ENCODE measurements at regions of chr17 and their contacts with region 1.

Region 1: DNA sequence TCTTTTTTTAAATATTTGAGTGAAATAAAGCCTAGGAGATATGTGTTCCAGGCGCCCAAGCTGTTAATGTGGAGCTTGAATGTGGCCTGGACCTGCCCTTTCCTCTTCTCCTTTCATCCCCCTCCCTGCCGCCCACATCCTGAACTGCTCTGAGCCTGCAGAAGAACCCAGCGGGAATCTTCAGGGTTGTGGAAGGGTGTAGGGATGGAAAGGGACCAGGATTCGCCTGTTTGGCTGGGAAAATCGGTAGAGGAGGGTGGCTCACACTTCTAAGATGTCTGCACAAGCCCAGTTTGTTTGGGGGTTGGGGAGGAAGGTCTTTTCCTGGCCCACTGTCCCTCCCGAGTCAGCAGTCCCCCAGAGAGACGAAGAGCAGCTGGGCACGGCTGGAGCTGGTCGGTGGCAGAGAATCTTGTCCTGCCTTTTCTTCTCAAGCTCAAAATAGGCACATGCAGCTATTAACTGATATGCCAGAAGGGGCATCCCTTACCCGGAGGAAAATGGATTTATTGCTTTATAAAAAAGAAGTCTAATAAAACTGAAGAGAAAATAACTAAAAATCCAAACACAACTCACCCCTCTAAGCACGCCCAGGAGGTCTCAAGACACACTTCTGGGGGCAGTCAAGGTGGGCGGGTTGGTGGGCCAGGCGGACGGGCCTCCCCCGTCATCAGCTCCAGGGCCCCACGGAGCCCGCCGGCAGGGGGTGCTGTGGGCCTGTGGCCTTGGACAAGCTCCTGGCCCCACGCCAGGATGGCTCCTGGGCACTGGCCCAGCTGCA is 11.5 kb upstream of the PITPNA start:
- DNase-seq: peak; percentile 88 to 89
- H3K4me3 ChIP-seq: no peak overlapping the region
- H3K27ac ChIP-seq: peak overlapping the region in 2 of 3 donors; percentile 54 to 80
- H3K4me1 ChIP-seq: peaks cover 15 to 38% of the 10 kb centered on the region in 2 donors
- H3K27me3 ChIP-seq: no peaks in the 10 kb centered on the region
- CTCF ChIP-seq: peak; percentile 91 to 98 (median 94)
- POLR2A ChIP-seq: no peak

Region 2: GRCh38 chr17:1629647-1630310 is 55.7 kb after region 1 on chr17:
- intact Hi-C with region 1: loop called (anchors 5 kb)
- DNase-seq: peak; percentile 47 to 58
- H3K4me3 ChIP-seq: peak overlapping the region in 2 of 3 donors; percentile 67 to 75
- H3K27ac ChIP-seq: peak overlapping the region in 2 of 3 donors; percentile 95 to 96
- H3K4me1 ChIP-seq: peaks cover 15 to 29% of the 10 kb centered on the region in 2 donors
- H3K27me3 ChIP-seq: no peaks in the 10 kb centered on the region
- CTCF ChIP-seq: peak in 5 of 6 experiments; percentile 14 to 59 (median 47)
- POLR2A ChIP-seq: no peak

Region 3: DNA sequence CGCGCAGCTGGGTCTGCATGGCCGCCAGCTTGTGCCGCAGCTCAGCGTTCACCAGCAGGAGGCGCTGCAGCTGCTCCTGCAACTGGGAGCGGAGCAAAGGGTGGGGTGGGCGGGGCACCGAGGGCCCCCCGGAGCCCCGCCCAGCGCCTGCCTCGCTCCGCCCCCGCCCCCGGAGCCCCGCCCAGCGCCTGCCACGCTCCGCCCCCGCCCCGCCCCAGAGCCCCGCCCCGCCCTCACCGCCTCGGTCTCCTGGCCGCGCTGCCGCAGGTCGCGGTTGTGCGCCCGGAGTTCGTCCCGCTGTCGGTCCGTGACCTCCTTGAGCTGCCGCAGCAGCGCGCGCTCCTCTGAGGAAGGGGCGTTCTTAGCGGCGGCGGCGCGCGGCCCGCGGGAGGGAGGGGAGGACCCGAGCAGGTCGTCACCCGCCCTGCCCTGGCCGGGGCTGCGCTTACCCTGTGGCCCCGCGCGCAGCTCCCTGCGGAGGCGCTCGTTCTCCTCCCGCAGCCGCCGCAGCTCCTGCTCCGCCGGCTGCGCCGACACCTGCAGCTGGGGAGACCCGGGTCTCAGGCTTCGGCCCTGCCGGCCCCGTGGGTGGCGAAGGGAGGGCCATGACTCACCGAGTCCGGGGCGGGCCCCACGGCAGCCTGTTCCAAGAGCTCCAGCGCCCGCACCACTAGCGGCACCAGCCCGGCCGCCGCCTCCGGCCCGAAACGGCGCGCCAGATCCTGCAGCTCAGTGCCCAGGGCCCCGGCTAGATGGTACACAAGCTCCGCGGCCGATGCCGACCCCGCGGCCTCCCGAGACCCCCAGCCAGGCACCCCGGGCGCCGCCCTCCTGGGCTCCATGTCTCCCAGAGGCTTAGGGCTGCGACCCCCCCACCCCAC is 75.1 kb after region 1 on chr17:
- intact Hi-C with region 1: loop called (anchors 5 kb)
- DNase-seq: peak; percentile 95 to 96
- H3K4me3 ChIP-seq: peak overlapping the region; percentile 74 to 93 (median 89)
- H3K27ac ChIP-seq: peak overlapping the region; percentile 95 to 100 (median 100)
- H3K4me1 ChIP-seq: peaks cover 35 to 57% of the 10 kb centered on the region in 2 donors
- H3K27me3 ChIP-seq: no peaks in the 10 kb centered on the region
- CTCF ChIP-seq: peak in 3 of 6 experiments; percentile 67 to 99 (median 83)
- POLR2A ChIP-seq: peak; percentile 58 to 86

Region 4: DNA sequence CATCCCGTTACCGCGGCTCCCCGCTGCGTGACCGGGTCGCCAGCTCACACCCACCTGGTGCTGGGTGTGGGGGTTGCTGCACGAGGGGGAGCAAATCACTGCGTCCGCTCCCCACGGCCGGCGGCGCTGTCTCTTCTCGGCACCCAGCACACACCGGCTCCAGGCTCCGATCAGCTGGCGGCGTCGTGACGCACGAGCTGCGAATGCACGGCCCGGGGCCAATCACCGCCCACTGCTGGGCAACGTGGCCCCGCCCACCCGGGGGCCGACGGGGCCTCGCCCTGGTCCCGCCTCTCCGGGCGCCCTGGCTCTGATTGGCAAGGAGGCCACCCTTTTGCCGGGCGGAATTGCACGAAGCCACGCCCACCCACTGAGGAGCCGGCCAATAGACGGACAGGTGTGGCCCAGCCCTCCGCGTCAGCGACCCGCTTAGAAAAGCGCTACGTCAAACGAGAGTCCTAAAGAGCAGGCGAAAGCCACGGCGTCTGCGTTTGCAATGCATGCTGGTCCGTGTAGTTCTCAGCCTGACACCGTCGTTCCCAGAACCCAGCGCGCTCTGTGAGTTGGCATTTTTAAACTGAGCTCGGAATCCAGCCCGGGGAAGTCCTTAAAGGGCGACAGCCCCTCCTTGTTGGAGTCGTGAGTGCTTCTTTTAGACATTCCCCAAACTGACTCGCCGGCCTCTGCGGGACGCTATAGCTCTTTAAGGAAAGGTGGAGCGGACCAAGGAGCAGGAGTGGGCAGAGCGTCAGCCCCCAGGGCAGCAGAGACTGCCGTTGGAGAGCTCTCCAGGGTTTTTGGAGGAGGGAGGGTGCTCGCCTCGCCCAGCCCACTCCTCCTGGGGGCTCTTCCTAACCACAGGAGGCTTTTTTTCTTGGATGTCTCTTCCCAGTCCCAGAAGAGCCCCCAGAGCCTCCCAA is 142.2 kb after region 1 on chr17:
- intact Hi-C with region 1: loop called (anchors 10 kb)
- DNase-seq: peak; percentile 100
- H3K4me3 ChIP-seq: peak overlapping the region; percentile 82 to 99 (median 94)
- H3K27ac ChIP-seq: peak overlapping the region; percentile 98 to 100 (median 99)
- H3K4me1 ChIP-seq: peaks cover 12 to 34% of the 10 kb centered on the region in 2 donors
- H3K27me3 ChIP-seq: no peaks in the 10 kb centered on the region
- CTCF ChIP-seq: peak in 1 of 6 experiments; percentile 32
- POLR2A ChIP-seq: peak; percentile 96 to 100

Region 5: DNA sequence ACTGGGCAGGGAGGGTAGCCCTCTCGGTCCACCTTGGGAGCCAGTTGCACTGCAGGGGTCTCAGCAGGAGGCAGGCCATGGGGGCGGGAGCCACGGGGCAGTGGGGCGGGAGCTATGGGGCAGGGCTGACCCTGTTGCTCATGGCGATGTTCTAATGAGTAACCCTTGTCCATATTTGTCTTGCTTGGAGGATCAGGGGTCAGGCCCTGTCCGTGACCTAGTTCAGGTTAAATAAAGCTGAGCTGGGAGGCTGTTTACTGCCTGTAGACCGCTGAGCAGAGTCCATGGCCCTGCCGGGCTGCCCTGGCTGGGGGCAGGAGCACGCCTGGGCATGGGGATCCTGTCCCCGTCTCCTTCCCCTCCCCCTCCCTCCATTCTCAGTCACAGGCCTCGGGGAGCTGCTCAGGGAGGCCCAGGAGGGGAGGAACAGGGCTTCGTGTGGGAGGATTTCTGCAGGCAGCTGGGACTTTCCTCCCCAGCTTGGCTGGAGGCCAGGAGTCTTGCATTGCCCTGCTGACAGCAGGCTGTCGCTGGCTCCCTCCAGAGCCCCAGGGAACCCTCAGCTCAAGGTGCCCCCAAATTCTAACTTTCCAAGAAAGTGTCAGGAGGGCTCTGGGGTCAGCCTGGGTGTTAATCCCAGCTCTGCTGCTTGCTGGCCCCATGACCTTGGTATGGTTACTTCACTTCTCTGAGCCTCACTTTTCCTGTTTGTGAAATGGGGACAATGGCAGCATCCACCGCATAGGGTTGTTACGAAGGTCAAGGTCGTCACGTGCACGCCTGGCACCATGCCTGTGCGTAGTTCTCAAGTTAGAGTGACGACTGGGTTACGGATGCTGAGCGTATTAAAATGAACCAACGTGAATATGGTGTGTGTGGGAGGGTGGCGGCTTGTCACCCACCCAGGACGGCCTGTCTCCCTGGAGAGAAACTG is 162.5 kb after region 1 on chr17:
- intact Hi-C with region 1: no loop called
- DNase-seq: peak in 1 of 2 donors; percentile 22
- H3K4me3 ChIP-seq: no peak overlapping the region
- H3K27ac ChIP-seq: no peak overlapping the region
- H3K4me1 ChIP-seq: no peaks in the 10 kb centered on the region
- H3K27me3 ChIP-seq: no peaks in the 10 kb centered on the region
- CTCF ChIP-seq: no peak
- POLR2A ChIP-seq: no peak

Region 6: DNA sequence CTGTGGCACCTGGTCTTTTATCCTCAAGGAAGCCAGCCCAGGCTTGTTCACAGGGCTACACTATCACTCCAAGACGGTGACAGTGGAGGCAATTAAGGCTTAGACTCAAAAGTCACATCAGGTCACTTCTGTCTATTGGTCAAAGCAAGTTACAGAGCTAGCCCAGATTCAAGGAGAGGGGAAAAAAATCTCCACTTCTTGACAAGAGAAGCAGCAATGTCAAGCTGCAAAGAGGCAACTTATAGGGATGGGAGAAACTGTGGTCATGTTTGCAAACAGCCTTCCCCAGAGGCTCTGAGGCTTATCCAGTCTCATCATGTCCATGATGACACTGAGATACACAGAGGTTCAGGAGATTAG is 219.3 kb after region 1 on chr17:
- intact Hi-C with region 1: no loop called
- DNase-seq: peak; percentile 40 to 65
- H3K4me3 ChIP-seq: no peak overlapping the region
- H3K27ac ChIP-seq: peak overlapping the region; percentile 41 to 79 (median 71)
- H3K4me1 ChIP-seq: peaks cover 8 to 26% of the 10 kb centered on the region in 2 donors
- H3K27me3 ChIP-seq: no peaks in the 10 kb centered on the region
- CTCF ChIP-seq: no peak
- POLR2A ChIP-seq: no peak

Measured in thyroid gland (tissue), 4 donors.